AG04449 (cell line): ENCODE measurements at regions of chr16 and their contacts with region 1.

Region 1: GRCh38 chr16:82263521-82264143 is 93.6 kb upstream of the MPHOSPH6 start:
- DNase-seq: no peak
- H3K4me3 ChIP-seq: no peak overlapping the region
- CTCF ChIP-seq: peak; percentile 84

Region 2: DNA sequence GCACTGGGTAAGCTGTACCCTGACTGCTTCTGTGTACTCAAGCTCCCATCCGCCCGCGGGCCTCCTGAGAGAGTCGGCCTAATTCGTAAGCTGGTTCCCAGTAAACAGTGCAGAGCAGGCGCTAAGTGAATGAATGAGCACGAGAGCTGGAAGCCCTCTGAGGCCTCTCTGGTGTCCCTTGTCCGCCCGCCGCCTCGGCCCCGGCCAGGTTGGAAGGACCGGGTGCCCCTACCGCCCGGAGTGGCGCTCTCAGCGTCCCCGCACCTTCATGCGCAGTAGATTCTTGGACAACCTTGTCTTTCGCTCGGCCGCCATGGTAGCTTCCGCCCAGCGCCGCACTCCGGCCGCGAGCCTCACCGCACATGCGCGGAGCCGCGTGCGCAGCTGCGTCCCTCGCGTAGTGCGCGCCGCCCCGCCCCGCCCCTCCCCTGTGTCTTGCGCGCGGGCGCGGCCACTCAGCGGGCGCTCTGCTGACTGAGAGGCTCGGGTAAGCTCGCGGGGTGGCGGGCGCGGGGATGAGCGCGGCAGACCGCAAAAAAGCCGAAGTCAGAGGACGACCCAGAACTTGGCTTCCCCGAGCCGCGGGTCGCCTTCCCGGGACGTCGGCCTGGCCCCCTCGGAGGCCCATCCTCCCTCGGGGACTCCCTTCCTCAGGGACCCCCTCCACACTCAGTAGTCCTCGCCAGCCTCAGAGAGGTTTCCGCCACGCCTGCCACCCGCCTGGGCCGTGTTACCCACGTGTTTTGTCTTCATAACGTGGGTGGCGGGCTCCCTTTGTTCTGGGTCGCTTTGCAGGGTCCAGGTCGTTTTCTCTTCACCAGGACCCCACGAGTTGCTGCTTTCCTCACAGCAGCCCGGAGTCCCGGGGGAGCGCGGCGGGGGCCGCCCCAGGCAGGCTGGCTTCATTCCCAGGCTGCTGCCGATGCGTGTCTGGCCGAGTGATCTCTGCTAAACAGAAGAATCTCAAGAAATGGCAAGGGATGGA is 93.5 kb before region 1 on chr16 and contains the start of gene MPHOSPH6:
- CTCF ChIA-PET with region 1: no interaction called
- POLR2A ChIA-PET with region 1: no interaction called
- DNase-seq: no peak
- H3K4me3 ChIP-seq: peak within 1 kb of the TSS; percentile 83
- CTCF ChIP-seq: no peak

Region 3: DNA sequence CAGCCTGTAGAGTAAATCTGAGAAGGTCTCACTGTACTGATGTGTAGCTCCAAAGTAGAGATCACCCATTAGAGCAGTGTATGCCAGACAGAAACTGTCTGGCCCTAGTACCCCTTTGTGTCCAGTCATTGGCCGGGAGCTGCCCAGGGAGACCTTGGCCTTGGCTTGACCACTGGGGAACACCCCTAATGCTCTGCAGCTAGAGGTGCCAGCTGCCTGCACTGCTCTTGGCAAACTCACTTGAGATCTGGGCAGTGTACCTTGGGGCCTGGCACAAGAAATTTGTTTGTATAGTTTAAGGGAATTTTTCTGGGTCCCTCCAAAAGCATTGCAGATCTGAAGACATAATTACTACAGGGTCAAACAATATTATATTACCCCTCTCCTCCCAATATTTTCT is 15.0 kb before region 1 on chr16:
- CTCF ChIA-PET with region 1: interaction called, 25 read pairs
- POLR2A ChIA-PET with region 1: no interaction called
- DNase-seq: no peak
- H3K4me3 ChIP-seq: no peak overlapping the region
- CTCF ChIP-seq: no peak

Region 4: GRCh38 chr16:82344157-82344556 is 80.5 kb after region 1 on chr16:
- CTCF ChIA-PET with region 1: interaction called, 12 read pairs
- POLR2A ChIA-PET with region 1: no interaction called
- DNase-seq: no peak
- H3K4me3 ChIP-seq: no peak overlapping the region
- CTCF ChIP-seq: no peak

Region 5: GRCh38 chr16:82580298-82580890 is 316.8 kb after region 1 on chr16:
- CTCF ChIA-PET with region 1: interaction called, 17 read pairs
- POLR2A ChIA-PET with region 1: no interaction called
- DNase-seq: no peak
- H3K4me3 ChIP-seq: no peak overlapping the region
- CTCF ChIP-seq: no peak

Region 6: DNA sequence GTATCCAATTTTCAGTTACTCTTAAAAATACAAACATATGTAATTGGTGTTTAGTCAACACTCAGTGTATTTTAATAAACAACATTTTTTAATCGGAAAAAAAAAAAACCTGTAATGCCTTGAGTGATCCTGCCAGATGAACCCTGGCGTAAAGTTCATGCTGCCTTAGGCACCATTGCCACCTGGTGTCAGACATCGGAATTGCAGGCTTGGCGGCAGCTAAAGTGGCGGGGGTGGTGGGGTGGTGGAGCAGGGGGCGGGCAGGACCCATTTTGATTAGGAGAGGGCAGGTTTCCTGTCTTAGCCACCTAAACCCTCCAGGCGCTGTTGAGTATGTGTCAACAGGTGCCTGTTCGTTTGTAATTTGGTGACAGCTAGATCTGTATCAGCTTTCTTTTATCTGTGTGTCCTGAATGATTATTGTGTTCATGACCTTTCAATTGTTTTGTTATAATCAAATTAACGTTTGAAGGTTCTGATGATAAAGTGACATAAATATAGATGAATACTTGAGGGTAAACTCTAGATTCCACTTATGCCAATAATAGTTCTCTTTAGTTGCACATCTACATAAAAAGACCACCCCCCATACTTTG is 951.9 kb after region 1 on chr16:
- CTCF ChIA-PET with region 1: interaction called, 18 read pairs
- POLR2A ChIA-PET with region 1: no interaction called
- DNase-seq: no peak
- H3K4me3 ChIP-seq: no peak overlapping the region
- CTCF ChIP-seq: peak; percentile 79

Region 7: DNA sequence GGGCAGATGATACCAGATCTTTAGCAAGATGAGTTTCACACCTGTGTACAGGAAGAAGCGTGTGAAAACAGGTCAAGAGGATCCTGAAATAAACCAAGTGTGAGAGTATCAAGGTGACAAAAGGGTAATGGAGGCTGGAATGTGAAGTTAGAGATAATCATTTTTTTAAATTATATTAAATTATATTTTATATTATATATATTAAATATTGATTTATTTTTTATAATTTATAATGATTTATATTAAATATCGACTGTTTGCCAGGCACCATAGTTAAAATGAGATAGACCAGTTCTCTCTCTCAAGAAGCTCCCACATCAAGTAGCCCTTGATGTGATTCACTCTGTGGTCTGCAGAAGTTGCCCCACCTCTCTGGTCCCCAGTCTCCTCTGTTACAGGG is 1183.9 kb after region 1 on chr16:
- CTCF ChIA-PET with region 1: interaction called, 48 read pairs
- POLR2A ChIA-PET with region 1: no interaction called
- DNase-seq: no peak
- H3K4me3 ChIP-seq: no peak overlapping the region
- CTCF ChIP-seq: no peak